Activated B cell treated with CpG ODN at 0.5 μM for 24 hours (primary cell): ENCODE measurements at regions of chr7 and their contacts with region 1.

Region 1: GRCh38 chr7:35624299-35625186 is 70.4 kb downstream of the HERPUD2 start:
- DNase-seq: peak; percentile 18
- ATAC-seq: peak; percentile 86
- H3K4me3 Mint-ChIP-seq: no peak overlapping the region
- H3K27ac Mint-ChIP-seq: no peak overlapping the region
- H3K4me1 Mint-ChIP-seq: peaks cover 2% of the 10 kb centered on the region
- H3K27me3 Mint-ChIP-seq: no peaks in the 10 kb centered on the region
- CTCF ChIP-seq: peak; percentile 81

Region 2: GRCh38 chr7:35537067-35538023 is 87.2 kb before region 1 on chr7:
- CTCF ChIA-PET with region 1: no interaction called
- POLR2A ChIA-PET with region 1: no interaction called
- intact Hi-C with region 1: loop called (anchors 1 kb)
- DNase-seq: peak; percentile 76
- ATAC-seq: peak; percentile 97
- H3K4me3 Mint-ChIP-seq: peak overlapping the region; percentile 84
- H3K27ac Mint-ChIP-seq: no peak overlapping the region
- H3K4me1 Mint-ChIP-seq: peaks cover 4% of the 10 kb centered on the region
- H3K27me3 Mint-ChIP-seq: peaks cover 23% of the 10 kb centered on the region
- CTCF ChIP-seq: peak; percentile 82

Region 3: GRCh38 chr7:37510043-37510634 is 1885.6 kb after region 1 on chr7:
- CTCF ChIA-PET with region 1: no interaction called
- POLR2A ChIA-PET with region 1: no interaction called
- intact Hi-C with region 1: no loop called
- DNase-seq: no peak
- ATAC-seq: peak; percentile 60
- H3K4me3 Mint-ChIP-seq: no peak overlapping the region
- H3K27ac Mint-ChIP-seq: no peak overlapping the region
- H3K4me1 Mint-ChIP-seq: no peaks in the 10 kb centered on the region
- H3K27me3 Mint-ChIP-seq: peaks cover 14% of the 10 kb centered on the region
- CTCF ChIP-seq: no peak